K562 (cell line): ENCODE measurements at regions of chr1 and their contacts with region 1.

Region 1: DNA sequence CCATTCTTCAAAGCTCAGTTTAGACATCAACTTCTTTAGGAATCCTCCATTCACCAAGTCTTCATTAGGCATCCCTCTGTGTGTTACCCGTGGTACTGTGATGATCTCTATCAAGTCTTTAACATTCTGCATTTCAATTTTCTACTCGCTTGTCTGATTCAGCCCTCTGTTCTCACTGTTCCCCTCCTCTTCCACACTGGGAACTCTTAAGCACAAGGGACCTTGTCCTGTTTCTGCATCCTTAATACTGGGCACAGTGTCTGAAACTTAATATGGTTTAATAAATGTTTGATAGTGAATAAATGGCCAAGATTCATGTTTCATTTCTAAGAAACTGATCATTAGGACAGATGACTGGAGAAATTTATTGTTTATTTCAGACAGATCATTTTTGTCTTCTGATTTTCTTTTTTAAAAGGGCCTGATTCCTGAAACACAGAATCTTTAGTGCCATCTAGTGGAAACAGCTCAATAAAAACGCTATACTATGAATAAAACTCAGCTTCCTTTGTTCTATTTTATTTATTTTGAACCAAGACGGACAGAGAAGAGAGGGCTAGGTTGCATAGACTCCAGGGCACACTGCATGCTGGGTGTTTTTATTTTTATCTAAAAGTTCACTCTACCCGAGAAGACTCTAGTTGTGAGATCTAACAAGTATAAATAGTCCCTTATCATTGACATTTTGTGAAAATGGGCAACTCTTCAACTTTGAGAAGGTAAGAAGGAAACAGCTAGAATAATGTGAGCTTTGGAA is 7.0 kb upstream of the TRIM45 start:
- DNase-seq: peak in 2 of 4 experiments; percentile 48 to 49
- ATAC-seq: peak; percentile 72
- H3K4me3 ChIP-seq: no peak overlapping the region
- H3K27ac ChIP-seq: no peak overlapping the region
- H3K4me1 ChIP-seq: peaks cover 0 to 8% of the 10 kb centered on the region in 2 experiments; a peak in 2 of 5 replicates
- H3K27me3 ChIP-seq: peaks cover 6% of the 10 kb centered on the region in 2 experiments; a peak in 1 of 5 replicates
- CTCF ChIP-seq: peak; percentile 34 to 82 (median 52); a peak in 5 of 6 replicates
- EP300 ChIP-seq: no peak
- POLR2A ChIP-seq: no peak
- RAD21 ChIP-seq: peak; percentile 53 to 78

Region 2: GRCh38 chr1:117067533-117068370 is 60.7 kb before region 1 on chr1:
- CTCF ChIA-PET with region 1: interaction called, 44 read pairs
- POLR2A ChIA-PET with region 1: interaction called, 4 read pairs
- in situ Hi-C with region 1: no loop called
- intact Hi-C with region 1: loop called (anchors 1 kb)
- DNase-seq: peak; percentile 47 to 76 (median 61)
- ATAC-seq: peak; percentile 96
- H3K4me3 ChIP-seq: no peak overlapping the region
- H3K27ac ChIP-seq: no peak overlapping the region
- H3K4me1 ChIP-seq: no peaks in the 10 kb centered on the region; a peak in 1 of 5 replicates
- H3K27me3 ChIP-seq: no peaks in the 10 kb centered on the region
- CTCF ChIP-seq: peak; percentile 79 to 90 (median 88)
- EP300 ChIP-seq: no peak
- POLR2A ChIP-seq: no peak
- RAD21 ChIP-seq: peak; percentile 95

Region 3: GRCh38 chr1:117321680-117322609 is 193.4 kb after region 1 on chr1:
- CTCF ChIA-PET with region 1: no interaction called
- POLR2A ChIA-PET with region 1: no interaction called
- in situ Hi-C with region 1: no loop called
- intact Hi-C with region 1: no loop called
- DNase-seq: no peak
- ATAC-seq: no peak
- H3K4me3 ChIP-seq: no peak overlapping the region
- H3K27ac ChIP-seq: no peak overlapping the region
- H3K4me1 ChIP-seq: no peaks in the 10 kb centered on the region
- H3K27me3 ChIP-seq: peaks cover 9 to 16% of the 10 kb centered on the region in 2 experiments; a peak in 3 of 5 replicates
- CTCF ChIP-seq: no peak
- EP300 ChIP-seq: no peak
- POLR2A ChIP-seq: no peak
- RAD21 ChIP-seq: no peak